ENCODE measurements at regions of chr10 and their contacts with region 1.

Region 1: GRCh38 chr10:132551093-132551807 is 13.7 kb downstream of the INPP5A start:
- DNase-seq: peak; percentile 80
- ATAC-seq: peak; percentile 14
- H3K4me3 ChIP-seq: peak overlapping the region in 4 of 5 experiments; percentile 29 to 51 (median 41)
- H3K4me3 Mint-ChIP-seq: peak overlapping the region; percentile 85
- H3K27ac ChIP-seq: peak overlapping the region; percentile 87 to 88
- H3K27ac Mint-ChIP-seq: peak overlapping the region; percentile 96
- H3K4me1 ChIP-seq: peaks cover 76 to 82% of the 10 kb centered on the region in 2 donors
- H3K4me1 Mint-ChIP-seq: peaks cover 54% of the 10 kb centered on the region
- H3K27me3 ChIP-seq: no peaks in the 10 kb centered on the region
- H3K27me3 Mint-ChIP-seq: no peaks in the 10 kb centered on the region
- CTCF ChIP-seq: no peak

Region 2: DNA sequence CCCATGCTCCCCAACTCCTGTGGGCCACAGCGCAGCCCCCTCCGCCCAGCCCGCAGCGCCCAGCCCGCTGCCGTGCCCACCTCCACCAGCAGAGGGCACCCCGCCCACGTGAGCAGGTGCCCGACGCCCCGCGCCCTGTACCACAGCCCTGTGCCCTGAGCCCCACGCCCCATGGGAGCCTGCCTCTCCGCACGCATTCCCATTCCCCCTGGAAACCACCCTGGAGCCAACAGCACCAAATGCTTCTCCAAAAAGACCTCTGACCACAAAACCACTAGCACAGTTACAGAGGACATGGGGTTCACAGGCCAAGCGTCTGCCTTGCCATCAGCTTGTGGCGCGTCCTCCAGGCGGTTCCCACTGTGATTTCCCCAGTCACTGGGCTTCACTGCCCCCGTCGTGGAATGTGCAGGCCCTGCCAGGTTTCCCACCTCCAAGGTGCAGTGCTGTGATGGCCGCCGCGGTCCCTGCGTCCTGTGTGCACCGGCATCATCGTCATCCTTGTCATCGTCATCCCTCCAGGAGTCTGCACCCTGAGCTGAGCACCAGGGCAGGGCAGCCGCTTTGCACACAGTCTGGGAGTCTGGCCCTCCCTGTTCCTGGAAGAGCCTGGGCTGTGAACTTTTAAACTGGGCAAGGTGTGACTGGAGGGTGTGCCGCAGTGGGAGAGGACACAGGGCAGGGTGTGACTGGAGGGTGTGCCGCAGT is 92.5 kb before region 1 on chr10:
- CTCF ChIA-PET with region 1: interaction called, 14 read pairs
- POLR2A ChIA-PET with region 1: no interaction called
- intact Hi-C with region 1: no loop called
- DNase-seq: peak; percentile 82
- ATAC-seq: peak; percentile 92
- H3K4me3 ChIP-seq: no peak overlapping the region
- H3K4me3 Mint-ChIP-seq: no peak overlapping the region
- H3K27ac ChIP-seq: no peak overlapping the region
- H3K27ac Mint-ChIP-seq: no peak overlapping the region
- H3K4me1 ChIP-seq: peaks cover 4% of the 10 kb centered on the region in 2 donors
- H3K4me1 Mint-ChIP-seq: peaks cover 2% of the 10 kb centered on the region
- H3K27me3 ChIP-seq: peaks cover 0 to 5% (median 0%) of the 10 kb centered on the region in 4 experiments
- H3K27me3 Mint-ChIP-seq: no peaks in the 10 kb centered on the region
- CTCF ChIP-seq: peak; percentile 90

Region 3: GRCh38 chr10:132593900-132594876 is 42.9 kb after region 1 on chr10:
- CTCF ChIA-PET with region 1: interaction called, 3 read pairs
- POLR2A ChIA-PET with region 1: interaction called, 9 read pairs
- intact Hi-C with region 1: loop called (anchors 1 kb)
- DNase-seq: peak; percentile 78
- ATAC-seq: peak; percentile 72
- H3K4me3 ChIP-seq: peak overlapping the region in 3 of 5 experiments; percentile 25 to 60 (median 35)
- H3K4me3 Mint-ChIP-seq: peak overlapping the region; percentile 78
- H3K27ac ChIP-seq: peak overlapping the region; percentile 90 to 92
- H3K27ac Mint-ChIP-seq: peak overlapping the region; percentile 93
- H3K4me1 ChIP-seq: peaks cover 50 to 61% of the 10 kb centered on the region in 2 donors
- H3K4me1 Mint-ChIP-seq: peaks cover 88% of the 10 kb centered on the region
- H3K27me3 ChIP-seq: no peaks in the 10 kb centered on the region
- H3K27me3 Mint-ChIP-seq: no peaks in the 10 kb centered on the region
- CTCF ChIP-seq: no peak

Measured in B cell (primary cell).